ENCODE measurements at regions of chr1 and their contacts with region 1.

Region 1: GRCh38 chr1:101288491-101288944 is 51.7 kb downstream of the S1PR1 start:
- DNase-seq: peak; percentile 97
- H3K4me3 ChIP-seq: no peak overlapping the region
- H3K27ac ChIP-seq: peak overlapping the region; percentile 76
- H3K4me1 ChIP-seq: peaks cover 41% of the 10 kb centered on the region
- H3K27me3 ChIP-seq: no peaks in the 10 kb centered on the region
- CTCF ChIP-seq: peak; percentile 76 to 85
- POLR2A ChIP-seq: no peak

Region 2: DNA sequence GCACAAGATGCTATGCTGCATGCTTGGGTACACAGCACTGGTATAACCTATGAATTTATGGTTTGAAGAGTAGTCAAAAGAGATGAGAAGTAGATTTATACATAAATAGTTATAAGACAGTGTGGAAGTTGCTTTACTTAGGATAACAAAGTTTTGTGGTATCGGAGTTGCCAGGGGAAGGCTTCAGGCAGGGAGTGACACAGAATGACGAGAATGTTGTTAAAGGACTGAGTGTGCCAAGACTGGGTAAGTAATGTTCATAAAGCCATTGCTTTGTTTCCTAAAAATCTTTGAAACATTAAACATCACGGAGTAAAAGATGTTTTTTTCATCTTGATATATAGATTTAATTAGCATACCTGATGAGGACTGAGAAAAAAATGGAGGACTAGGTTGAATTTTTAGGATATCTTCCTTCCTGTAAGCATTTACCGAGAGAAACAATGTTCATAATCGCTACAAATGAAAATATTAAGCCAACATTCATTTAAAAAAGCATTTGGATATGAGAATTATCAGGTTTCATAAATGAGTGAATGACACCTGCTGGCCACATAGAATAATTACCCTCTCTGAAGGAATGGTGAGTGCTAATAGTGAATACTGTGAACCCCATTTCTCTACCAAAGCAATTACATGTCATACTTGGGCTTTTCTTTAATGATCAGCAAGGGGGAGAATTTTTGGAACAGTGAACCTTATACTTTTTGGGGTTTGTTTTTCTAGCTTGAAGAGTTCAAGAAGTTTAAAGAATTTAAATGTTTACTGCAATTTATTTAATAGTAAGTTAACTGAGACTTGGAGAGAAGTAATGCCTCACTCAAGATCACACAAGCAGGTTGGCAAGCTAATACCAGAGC is 422.2 kb before region 1 on chr1:
- CTCF ChIA-PET with region 1: interaction called, 12 read pairs
- POLR2A ChIA-PET with region 1: no interaction called
- dilution Hi-C with region 1: no loop called
- intact Hi-C with region 1: no loop called
- DNase-seq: peak; percentile 78
- H3K4me3 ChIP-seq: peak overlapping the region in 1 of 3 experiments; percentile 33
- H3K27ac ChIP-seq: peak overlapping the region; percentile 70
- H3K4me1 ChIP-seq: peaks cover 17% of the 10 kb centered on the region
- H3K27me3 ChIP-seq: no peaks in the 10 kb centered on the region
- CTCF ChIP-seq: peak; percentile 44 to 49
- POLR2A ChIP-seq: no peak

Region 3: DNA sequence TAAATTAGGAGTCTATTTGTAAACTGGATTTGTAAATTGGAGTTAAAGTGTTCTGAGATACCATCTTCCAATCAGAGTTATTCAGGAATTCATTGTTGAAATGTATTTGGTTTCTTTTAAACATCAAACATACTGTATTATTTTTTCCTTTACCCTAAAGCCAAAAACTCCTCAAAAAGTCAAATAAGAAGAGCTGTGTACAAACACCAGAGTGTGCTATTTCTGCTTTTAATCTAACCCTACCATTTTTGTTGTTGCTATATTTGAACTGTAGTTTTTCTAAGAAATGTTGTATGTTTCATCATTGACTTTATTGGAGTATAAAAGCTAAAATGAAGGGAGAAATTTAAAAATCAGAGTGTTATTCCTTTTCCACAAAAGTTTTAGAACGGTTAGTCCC is 356.8 kb before region 1 on chr1:
- CTCF ChIA-PET with region 1: interaction called, 14 read pairs
- POLR2A ChIA-PET with region 1: no interaction called
- dilution Hi-C with region 1: no loop called
- intact Hi-C with region 1: no loop called
- DNase-seq: no peak
- H3K4me3 ChIP-seq: no peak overlapping the region
- H3K27ac ChIP-seq: no peak overlapping the region
- H3K4me1 ChIP-seq: no peaks in the 10 kb centered on the region
- H3K27me3 ChIP-seq: no peaks in the 10 kb centered on the region
- CTCF ChIP-seq: no peak
- POLR2A ChIP-seq: no peak

Region 4: GRCh38 chr1:101161619-101162018 is 126.9 kb before region 1 on chr1:
- CTCF ChIA-PET with region 1: interaction called, 10 read pairs
- POLR2A ChIA-PET with region 1: no interaction called
- dilution Hi-C with region 1: no loop called
- intact Hi-C with region 1: no loop called
- DNase-seq: peak; percentile 95
- H3K4me3 ChIP-seq: peak overlapping the region in 1 of 3 experiments; percentile 33
- H3K27ac ChIP-seq: peak overlapping the region; percentile 98
- H3K4me1 ChIP-seq: peaks cover 34% of the 10 kb centered on the region
- H3K27me3 ChIP-seq: no peaks in the 10 kb centered on the region
- CTCF ChIP-seq: no peak
- POLR2A ChIP-seq: no peak

Region 5: DNA sequence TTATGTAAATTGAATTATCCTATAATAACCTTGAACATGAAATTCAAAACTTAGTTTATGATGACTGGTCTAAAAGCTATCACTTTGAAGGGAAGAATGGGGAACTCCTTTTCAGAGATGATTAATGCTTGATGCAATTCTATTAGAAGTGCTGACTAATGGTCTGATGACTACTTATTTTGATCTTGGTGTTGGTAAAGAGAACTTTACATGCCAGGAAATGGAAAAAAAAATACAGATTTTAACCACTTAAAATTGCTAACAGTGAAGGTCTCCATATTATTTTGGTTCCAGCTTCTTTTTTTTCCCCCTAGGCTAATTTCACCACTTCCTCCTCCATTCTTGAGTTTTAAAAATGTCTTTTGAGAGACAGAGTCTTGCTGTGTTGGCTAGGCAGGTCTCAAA is 28.8 kb before region 1 on chr1:
- CTCF ChIA-PET with region 1: interaction called, 16 read pairs
- POLR2A ChIA-PET with region 1: no interaction called
- dilution Hi-C with region 1: no loop called
- intact Hi-C with region 1: loop called (anchors 1 kb)
- DNase-seq: peak; percentile 83
- H3K4me3 ChIP-seq: no peak overlapping the region
- H3K27ac ChIP-seq: peak overlapping the region; percentile 85
- H3K4me1 ChIP-seq: peaks cover 53% of the 10 kb centered on the region
- H3K27me3 ChIP-seq: no peaks in the 10 kb centered on the region
- CTCF ChIP-seq: no peak
- POLR2A ChIP-seq: no peak

Region 6: GRCh38 chr1:101309334-101310311 is 21.1 kb after region 1 on chr1:
- CTCF ChIA-PET with region 1: interaction called, 75 read pairs
- POLR2A ChIA-PET with region 1: interaction called, 3 read pairs
- dilution Hi-C with region 1: no loop called
- intact Hi-C with region 1: no loop called
- DNase-seq: peak; percentile 79
- H3K4me3 ChIP-seq: peak overlapping the region in 2 of 3 experiments; percentile 27 to 63
- H3K27ac ChIP-seq: no peak overlapping the region
- H3K4me1 ChIP-seq: peaks cover 6% of the 10 kb centered on the region
- H3K27me3 ChIP-seq: peaks cover 0 to 1% of the 10 kb centered on the region in 2 experiments
- CTCF ChIP-seq: peak; percentile 87 to 90
- POLR2A ChIP-seq: no peak

Region 7: DNA sequence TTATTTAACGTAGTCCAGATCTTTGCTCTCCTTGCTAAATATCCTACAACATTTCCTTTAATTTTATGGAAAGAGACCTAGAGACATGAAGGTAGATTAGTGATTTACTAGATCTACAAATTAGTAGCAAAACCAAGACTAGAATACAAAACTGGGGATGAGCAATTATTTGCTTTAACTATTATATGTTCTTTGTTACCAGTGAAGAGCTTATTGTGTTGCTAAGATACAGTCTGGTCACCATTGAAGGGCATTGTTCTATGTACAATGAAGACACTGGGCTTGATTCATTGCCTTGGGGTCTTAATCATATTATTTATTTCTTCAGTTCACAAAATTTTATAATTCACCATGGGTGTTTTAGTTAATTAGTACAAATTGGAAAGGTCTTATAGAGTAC is 36.6 kb after region 1 on chr1:
- CTCF ChIA-PET with region 1: no interaction called
- POLR2A ChIA-PET with region 1: no interaction called
- dilution Hi-C with region 1: no loop called
- intact Hi-C with region 1: no loop called
- DNase-seq: no peak
- H3K4me3 ChIP-seq: no peak overlapping the region
- H3K27ac ChIP-seq: no peak overlapping the region
- H3K4me1 ChIP-seq: no peaks in the 10 kb centered on the region
- H3K27me3 ChIP-seq: peaks cover 8% of the 10 kb centered on the region in 2 experiments
- CTCF ChIP-seq: no peak
- POLR2A ChIP-seq: no peak